Ovary (tissue), 10 donors: ENCODE measurements at regions of chr9 and their contacts with region 1.

Region 1: GRCh38 chr9:74773886-74774479 is 113.7 kb downstream of the TRPM6 start:
- DNase-seq: peak; percentile 47 to 78 (median 68)
- H3K4me3 ChIP-seq: no peak overlapping the region
- H3K27ac ChIP-seq: no peak overlapping the region
- H3K4me1 ChIP-seq: peaks cover 1% of the 10 kb centered on the region
- H3K27me3 ChIP-seq: no peaks in the 10 kb centered on the region
- CTCF ChIP-seq: peak; percentile 50 to 61 (median 60)
- EP300 ChIP-seq: no peak
- POLR2A ChIP-seq: no peak

Region 2: DNA sequence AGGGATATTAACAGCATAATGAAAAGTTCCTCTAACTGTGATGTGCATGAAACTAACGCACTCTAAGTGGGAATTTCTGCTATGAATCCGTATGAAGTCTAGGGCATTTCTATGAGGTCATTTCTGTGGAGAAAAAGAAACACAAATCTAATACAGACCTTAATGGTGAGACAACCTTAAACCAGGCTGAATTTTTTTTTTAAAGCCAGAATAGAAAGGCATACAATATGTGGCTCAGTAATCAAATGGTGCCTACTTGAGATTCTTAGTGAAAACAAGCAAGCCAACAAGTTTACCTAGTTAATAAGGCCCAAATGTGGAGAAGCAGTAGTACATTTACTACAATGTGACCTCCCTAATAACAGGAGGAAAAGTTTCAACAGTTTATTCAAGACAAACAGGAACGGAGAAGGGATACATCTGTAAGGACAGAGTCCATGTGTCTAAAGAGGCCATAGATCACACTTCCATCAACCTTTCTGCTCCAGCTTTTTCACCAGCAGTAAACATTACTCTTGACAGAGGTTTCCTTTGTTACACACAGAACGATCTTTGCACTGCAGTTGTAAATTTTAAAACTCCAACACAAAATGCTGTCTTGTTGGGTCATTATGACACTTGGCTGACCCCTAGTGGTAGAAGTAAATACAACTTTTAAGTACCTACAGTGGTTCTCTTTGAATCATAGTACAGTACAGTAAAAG is 227.9 kb after region 1 on chr9:
- intact Hi-C with region 1: loop called (anchors 2 to 10 kb)
- DNase-seq: no peak
- H3K4me3 ChIP-seq: no peak overlapping the region
- H3K27ac ChIP-seq: no peak overlapping the region
- H3K4me1 ChIP-seq: peaks cover 1% of the 10 kb centered on the region
- H3K27me3 ChIP-seq: no peaks in the 10 kb centered on the region
- CTCF ChIP-seq: peak; percentile 55 to 75 (median 69)
- EP300 ChIP-seq: no peak
- POLR2A ChIP-seq: no peak

Region 3: GRCh38 chr9:75017378-75017777 is 243.4 kb after region 1 on chr9:
- intact Hi-C with region 1: loop called in 1 of 4 experiments (anchors 1 kb)
- DNase-seq: no peak
- H3K4me3 ChIP-seq: no peak overlapping the region
- H3K27ac ChIP-seq: no peak overlapping the region
- H3K4me1 ChIP-seq: no peaks in the 10 kb centered on the region
- H3K27me3 ChIP-seq: no peaks in the 10 kb centered on the region
- CTCF ChIP-seq: no peak
- EP300 ChIP-seq: no peak
- POLR2A ChIP-seq: no peak

Region 4: GRCh38 chr9:75064307-75065025 is 290.5 kb after region 1 on chr9:
- intact Hi-C with region 1: loop called in 1 of 4 experiments (anchors 10 kb)
- DNase-seq: no peak
- H3K4me3 ChIP-seq: no peak overlapping the region
- H3K27ac ChIP-seq: no peak overlapping the region
- H3K4me1 ChIP-seq: no peaks in the 10 kb centered on the region
- H3K27me3 ChIP-seq: no peaks in the 10 kb centered on the region
- CTCF ChIP-seq: no peak
- EP300 ChIP-seq: no peak
- POLR2A ChIP-seq: no peak

Region 5: DNA sequence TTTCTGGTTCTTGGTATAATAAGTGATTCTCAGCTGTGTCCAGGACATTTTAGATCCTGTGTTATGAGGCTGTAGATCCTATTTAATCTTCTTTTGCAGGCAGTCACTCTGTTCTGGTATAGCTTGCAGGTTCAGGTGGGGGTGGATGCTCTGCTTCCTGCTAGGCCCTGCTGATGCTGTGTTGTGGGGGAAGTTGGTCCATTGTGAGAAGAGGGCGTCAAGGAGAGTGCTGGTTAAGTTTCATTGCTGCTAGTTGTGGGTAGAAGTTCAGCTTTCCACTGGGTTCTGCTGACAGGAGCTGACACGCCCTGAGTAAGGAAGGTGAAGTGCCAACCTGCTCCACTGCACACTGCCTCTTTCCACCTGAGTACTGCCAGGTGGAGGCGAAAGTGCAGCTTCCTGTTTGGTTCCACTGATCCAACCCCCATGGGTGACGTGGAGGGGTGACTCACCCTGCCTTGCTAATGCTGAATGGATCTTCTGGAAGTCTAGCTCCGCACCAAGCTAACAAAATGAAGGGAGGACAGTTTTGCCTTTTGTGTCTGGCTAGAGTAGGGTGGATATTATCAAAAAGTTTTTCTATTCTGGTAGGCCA is 297.6 kb after region 1 on chr9:
- intact Hi-C with region 1: loop called (anchors 2 to 10 kb)
- DNase-seq: no peak
- H3K4me3 ChIP-seq: no peak overlapping the region
- H3K27ac ChIP-seq: no peak overlapping the region
- H3K4me1 ChIP-seq: no peaks in the 10 kb centered on the region
- H3K27me3 ChIP-seq: no peaks in the 10 kb centered on the region
- CTCF ChIP-seq: no peak
- EP300 ChIP-seq: no peak
- POLR2A ChIP-seq: no peak